ENCODE measurements at regions of chr3 and their contacts with region 1.

Region 1: GRCh38 chr3:66971891-66972551 is 26.1 kb upstream of the KBTBD8 start:
- DNase-seq: peak; percentile 50
- H3K4me3 ChIP-seq: peak overlapping the region; percentile 53
- H3K27ac ChIP-seq: no peak overlapping the region
- H3K27me3 ChIP-seq: peaks cover 2% of the 10 kb centered on the region
- CTCF ChIP-seq: peak; percentile 97

Region 2: GRCh38 chr3:66938338-66938963 is 33.6 kb before region 1 on chr3:
- CTCF ChIA-PET with region 1: interaction called, 59 read pairs
- POLR2A ChIA-PET with region 1: no interaction called
- DNase-seq: peak; percentile 24
- H3K4me3 ChIP-seq: no peak overlapping the region
- H3K27ac ChIP-seq: no peak overlapping the region
- H3K27me3 ChIP-seq: no peaks in the 10 kb centered on the region
- CTCF ChIP-seq: peak; percentile 87

Region 3: GRCh38 chr3:66983101-66983500 is 11.1 kb after region 1 on chr3:
- CTCF ChIA-PET with region 1: interaction called, 52 read pairs
- POLR2A ChIA-PET with region 1: no interaction called
- DNase-seq: no peak
- H3K4me3 ChIP-seq: no peak overlapping the region
- H3K27ac ChIP-seq: no peak overlapping the region
- H3K27me3 ChIP-seq: peaks cover 9% of the 10 kb centered on the region
- CTCF ChIP-seq: peak; percentile 17; the same call in 1 of the 2 replicates

Region 4: DNA sequence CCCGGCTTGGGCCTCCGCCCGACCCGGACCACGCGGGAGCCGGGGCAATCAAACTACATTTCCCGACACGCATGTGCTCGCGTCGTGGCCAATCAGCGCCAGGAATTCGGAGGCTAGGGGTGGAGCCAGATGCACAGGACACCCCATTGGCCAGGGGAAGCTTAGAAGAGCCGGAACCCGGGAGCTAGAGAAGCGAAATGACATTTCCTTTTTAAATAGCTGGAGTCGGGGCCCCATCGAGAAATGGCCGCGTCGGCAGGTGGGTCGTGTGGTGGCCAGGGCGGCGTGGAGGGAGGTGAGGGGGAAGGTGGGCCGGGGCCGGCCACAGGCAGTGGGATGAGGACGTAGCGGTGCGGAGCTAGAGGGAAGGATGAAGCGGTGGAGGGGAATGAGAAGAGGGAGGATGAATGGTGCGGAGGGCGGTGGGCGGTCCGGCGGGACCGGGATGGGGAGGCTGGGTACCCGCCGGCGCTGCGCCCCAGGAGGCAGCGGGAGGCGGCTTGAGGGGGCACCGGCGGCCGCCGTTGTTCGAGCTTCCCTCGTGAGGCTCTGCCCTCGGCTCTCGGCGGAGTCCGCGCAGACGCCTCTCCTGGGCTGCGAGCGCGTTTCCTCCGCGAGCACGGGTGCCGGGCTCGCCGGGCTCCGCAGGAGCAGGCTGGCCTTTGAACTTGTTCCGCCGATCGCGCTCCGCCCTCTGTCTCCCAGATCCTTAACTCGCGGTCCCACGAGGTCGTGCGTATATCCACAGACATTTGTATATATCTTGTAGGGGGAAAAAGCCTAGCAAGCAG is 26.3 kb after region 1 on chr3 and contains the start of gene KBTBD8:
- CTCF ChIA-PET with region 1: interaction called, 26 read pairs
- POLR2A ChIA-PET with region 1: interaction called, 6 read pairs
- DNase-seq: peak; percentile 95
- H3K4me3 ChIP-seq: peak within 1 kb of the TSS; percentile 83
- H3K27ac ChIP-seq: peak within 1 kb of the TSS; percentile 54
- H3K27me3 ChIP-seq: no peaks in the 10 kb centered on the region
- CTCF ChIP-seq: no peak
- polyA plus RNA-seq, gene KBTBD8: 1.9 and 2.0 TPM in 2 replicates

Region 5: DNA sequence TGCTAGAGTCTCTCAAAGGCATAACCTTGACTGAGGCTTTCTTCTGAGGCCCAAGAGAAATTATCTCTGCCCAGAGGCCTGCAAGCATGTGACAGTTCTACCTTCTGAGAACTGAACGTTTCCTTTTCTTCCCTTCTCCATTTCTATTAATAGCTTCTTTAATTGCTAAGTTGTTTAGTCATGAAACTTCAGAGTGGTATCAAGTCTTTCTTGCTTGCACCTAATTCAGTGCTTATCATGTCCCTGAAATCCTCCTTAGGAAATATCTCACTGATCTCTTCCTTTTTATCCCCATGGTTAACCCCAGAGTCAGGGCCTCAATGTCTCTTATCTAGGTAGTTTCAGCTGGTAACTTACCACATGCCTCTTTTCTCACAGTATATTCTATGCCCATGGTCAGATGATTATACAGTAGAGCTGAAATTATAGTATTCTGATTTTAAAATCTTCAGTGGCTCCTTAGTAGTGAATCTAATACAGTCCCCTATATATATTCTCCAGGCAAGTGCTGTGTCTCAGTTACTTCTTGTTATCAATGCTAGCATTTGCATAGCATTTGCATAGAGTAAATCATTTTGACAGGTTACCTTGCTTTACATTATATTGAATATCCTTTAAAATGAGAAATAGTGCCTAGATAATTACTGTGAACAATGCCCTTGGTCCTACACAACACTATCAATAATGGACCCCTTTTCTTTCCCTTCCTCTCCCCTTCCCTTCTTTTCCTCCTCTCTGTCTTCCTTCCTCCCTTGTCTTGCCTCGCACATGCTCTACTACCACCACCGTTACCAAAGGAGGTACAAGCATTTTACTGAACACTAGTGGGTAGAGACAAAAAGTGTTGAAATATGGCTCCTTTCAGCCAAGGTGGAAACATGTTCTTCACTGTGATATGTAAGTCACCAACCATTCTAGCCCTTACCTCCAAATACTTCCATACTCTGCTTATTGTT is 59.0 kb after region 1 on chr3:
- CTCF ChIA-PET with region 1: interaction called, 92 read pairs
- POLR2A ChIA-PET with region 1: no interaction called
- DNase-seq: no peak
- H3K4me3 ChIP-seq: no peak overlapping the region
- H3K27ac ChIP-seq: no peak overlapping the region
- H3K27me3 ChIP-seq: peaks cover 2% of the 10 kb centered on the region
- CTCF ChIP-seq: no peak

Region 6: GRCh38 chr3:67113802-67114407 is 141.9 kb after region 1 on chr3:
- CTCF ChIA-PET with region 1: interaction called, 51 read pairs
- POLR2A ChIA-PET with region 1: no interaction called
- DNase-seq: peak; percentile 70
- H3K4me3 ChIP-seq: no peak overlapping the region
- H3K27ac ChIP-seq: no peak overlapping the region
- H3K27me3 ChIP-seq: no peaks in the 10 kb centered on the region
- CTCF ChIP-seq: peak; percentile 97

Region 7: GRCh38 chr3:68893600-68894239 is 1921.7 kb after region 1 on chr3:
- CTCF ChIA-PET with region 1: interaction called, 21 read pairs
- POLR2A ChIA-PET with region 1: no interaction called
- DNase-seq: no peak
- H3K4me3 ChIP-seq: no peak overlapping the region
- H3K27ac ChIP-seq: no peak overlapping the region
- H3K27me3 ChIP-seq: peaks cover 2% of the 10 kb centered on the region
- CTCF ChIP-seq: peak; percentile 44

Measured in AG04450 (cell line).